ENCODE measurements at regions of chr2 and their contacts with region 1.

Region 1: DNA sequence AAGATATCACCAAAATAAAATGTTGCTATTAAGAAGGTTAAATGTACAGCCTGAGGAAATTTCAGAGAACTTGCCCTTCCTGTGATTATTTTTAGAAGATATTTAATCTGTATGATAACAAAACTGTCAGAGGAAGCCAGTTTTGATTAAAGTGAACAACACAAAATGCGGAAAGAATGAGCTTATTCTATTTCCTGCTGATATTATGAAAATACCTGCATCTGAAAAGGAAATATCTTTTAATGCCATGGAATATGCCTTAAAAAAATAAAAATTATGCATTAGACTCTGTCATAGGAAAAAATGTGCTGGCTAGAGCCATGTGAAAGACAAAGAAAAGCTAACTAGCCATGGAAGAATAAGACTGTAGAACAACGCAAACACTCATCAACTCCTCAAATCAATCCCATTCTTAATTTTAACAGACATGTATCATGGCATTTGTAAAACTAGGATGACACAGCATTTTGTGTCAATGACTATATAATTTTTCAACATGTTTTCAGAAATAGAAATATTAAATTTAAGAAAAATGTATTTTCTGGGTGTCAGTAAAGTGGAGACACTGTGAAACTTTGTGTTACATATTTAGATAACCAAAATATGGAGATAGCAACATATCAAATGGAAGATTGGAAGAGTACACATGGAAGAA is 1768.2 kb downstream of the SUCLG1 start:
- DNase-seq: peak; percentile 93
- H3K4me3 ChIP-seq: no peak overlapping the region
- H3K27ac ChIP-seq: peak overlapping the region; percentile 68
- H3K4me1 ChIP-seq: peaks cover 34% of the 10 kb centered on the region
- H3K27me3 ChIP-seq: no peaks in the 10 kb centered on the region
- CTCF ChIP-seq: no peak
- POLR2A ChIP-seq: peak; percentile 41

Region 2: GRCh38 chr2:83103602-83104001 is 412.7 kb after region 1 on chr2:
- CTCF ChIA-PET with region 1: no interaction called
- POLR2A ChIA-PET with region 1: no interaction called
- dilution Hi-C with region 1: no loop called
- intact Hi-C with region 1: loop called (anchors 1 kb)
- DNase-seq: peak; percentile 91
- H3K4me3 ChIP-seq: no peak overlapping the region
- H3K27ac ChIP-seq: peak overlapping the region; percentile 86
- H3K4me1 ChIP-seq: peaks cover 24% of the 10 kb centered on the region
- H3K27me3 ChIP-seq: no peaks in the 10 kb centered on the region
- CTCF ChIP-seq: no peak
- POLR2A ChIP-seq: no peak